Colonic mucosa (tissue), 4 donors: ENCODE measurements at regions of chr4 and their contacts with region 1.

Region 1: GRCh38 chr4:41360214-41360920 is 103.6 kb downstream of the UCHL1 start:
- DNase-seq: peak; percentile 57
- H3K4me3 ChIP-seq: peak overlapping the region; percentile 71
- H3K27ac ChIP-seq: peak overlapping the region; percentile 32
- H3K4me1 ChIP-seq: no peaks in the 10 kb centered on the region
- H3K27me3 ChIP-seq: no peaks in the 10 kb centered on the region
- CTCF ChIP-seq: no peak

Region 2: DNA sequence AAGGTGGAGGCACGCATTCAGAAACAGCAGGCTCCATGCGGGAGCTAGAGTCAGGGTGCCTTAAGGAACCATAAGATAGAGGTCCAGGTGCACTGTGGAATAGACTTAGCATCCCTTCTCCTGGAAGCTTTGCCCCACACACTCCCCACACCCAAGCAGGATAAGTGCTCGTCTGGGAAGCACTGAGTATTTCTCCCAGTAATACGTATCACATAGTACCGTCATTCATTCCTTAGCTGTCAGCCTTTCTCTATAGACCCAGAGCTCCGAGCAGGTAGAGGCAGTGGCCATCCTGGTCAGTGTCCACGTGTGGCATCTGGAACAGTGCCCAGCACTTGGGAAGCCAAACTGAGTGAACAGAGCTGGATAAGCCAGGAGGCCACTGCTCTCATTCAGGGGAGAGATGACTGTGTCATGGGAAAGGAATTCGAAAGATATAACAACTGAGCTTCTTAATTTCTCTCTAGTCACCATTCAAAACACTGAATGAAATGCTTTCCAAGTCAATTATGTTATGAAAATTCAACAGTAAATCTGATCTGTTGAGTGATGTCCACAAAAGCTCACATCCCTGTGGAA is 155.9 kb before region 1 on chr4:
- intact Hi-C with region 1: no loop called
- DNase-seq: no peak
- H3K4me3 ChIP-seq: no peak overlapping the region
- H3K27ac ChIP-seq: no peak overlapping the region
- H3K4me1 ChIP-seq: peaks cover 3% of the 10 kb centered on the region
- H3K27me3 ChIP-seq: no peaks in the 10 kb centered on the region
- CTCF ChIP-seq: no peak

Region 3: GRCh38 chr4:41620594-41621256 is 260.4 kb after region 1 on chr4:
- intact Hi-C with region 1: loop called (anchors 10 kb)
- DNase-seq: no peak
- H3K4me3 ChIP-seq: no peak overlapping the region
- H3K27ac ChIP-seq: no peak overlapping the region
- H3K4me1 ChIP-seq: no peaks in the 10 kb centered on the region
- H3K27me3 ChIP-seq: no peaks in the 10 kb centered on the region
- CTCF ChIP-seq: no peak